AG04449 (cell line): ENCODE measurements at regions of chr2 and their contacts with region 1.

Region 1: DNA sequence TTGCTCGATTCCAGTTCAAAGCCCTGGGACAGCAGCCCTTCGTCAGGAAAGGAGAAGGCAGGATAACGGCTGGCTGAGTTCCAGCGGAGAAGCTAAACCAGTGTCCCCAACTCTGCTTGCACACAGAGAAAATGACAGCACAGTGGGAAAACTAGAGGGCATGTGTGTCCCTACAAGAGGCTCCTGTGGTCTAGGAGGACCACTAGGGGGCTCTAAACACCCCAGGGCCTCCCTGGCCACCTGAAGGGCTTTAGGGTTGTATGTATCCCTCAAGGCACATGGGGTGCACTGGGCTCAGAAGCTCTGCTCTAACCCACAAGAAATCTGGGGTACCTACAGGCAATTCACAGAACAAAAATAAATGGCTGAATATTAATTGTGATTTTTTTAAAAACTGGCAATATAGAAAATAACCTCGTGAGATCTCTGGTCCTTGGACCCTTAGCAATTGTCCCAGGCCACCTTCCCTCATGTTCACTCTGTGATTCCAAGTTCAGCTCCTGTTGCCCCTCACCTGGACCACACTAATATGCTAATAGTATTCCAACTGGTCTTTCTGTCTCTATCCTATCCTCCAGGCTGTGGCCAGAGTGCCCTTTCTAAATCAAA is 17.5 kb downstream of the STAT1 start:
- DNase-seq: no peak
- H3K4me3 ChIP-seq: no peak overlapping the region
- CTCF ChIP-seq: peak; percentile 70

Region 2: GRCh38 chr2:190986221-190986953 is 10.1 kb before region 1 on chr2:
- CTCF ChIA-PET with region 1: interaction called, 10 read pairs
- POLR2A ChIA-PET with region 1: no interaction called
- DNase-seq: no peak
- H3K4me3 ChIP-seq: no peak overlapping the region
- CTCF ChIP-seq: no peak

Region 3: GRCh38 chr2:191013932-191014652 is 17.6 kb after region 1 on chr2 and contains the start of gene STAT1:
- CTCF ChIA-PET with region 1: interaction called, 24 read pairs
- POLR2A ChIA-PET with region 1: interaction called, 3 read pairs
- DNase-seq: peak; percentile 77
- H3K4me3 ChIP-seq: peak within 1 kb of the TSS; percentile 95
- CTCF ChIP-seq: peak; percentile 2